ENCODE measurements at regions of chr14 and their contacts with region 1.

Region 1: GRCh38 chr14:67056684-67057083 is 132.6 kb upstream of the GARIN2 start:
- DNase-seq: no peak
- H3K4me3 ChIP-seq: no peak overlapping the region
- H3K27ac ChIP-seq: no peak overlapping the region
- H3K4me1 ChIP-seq: no peaks in the 10 kb centered on the region
- H3K27me3 ChIP-seq: no peaks in the 10 kb centered on the region
- CTCF ChIP-seq: no peak
- EP300 ChIP-seq: no peak
- POLR2A ChIP-seq: no peak

Region 2: DNA sequence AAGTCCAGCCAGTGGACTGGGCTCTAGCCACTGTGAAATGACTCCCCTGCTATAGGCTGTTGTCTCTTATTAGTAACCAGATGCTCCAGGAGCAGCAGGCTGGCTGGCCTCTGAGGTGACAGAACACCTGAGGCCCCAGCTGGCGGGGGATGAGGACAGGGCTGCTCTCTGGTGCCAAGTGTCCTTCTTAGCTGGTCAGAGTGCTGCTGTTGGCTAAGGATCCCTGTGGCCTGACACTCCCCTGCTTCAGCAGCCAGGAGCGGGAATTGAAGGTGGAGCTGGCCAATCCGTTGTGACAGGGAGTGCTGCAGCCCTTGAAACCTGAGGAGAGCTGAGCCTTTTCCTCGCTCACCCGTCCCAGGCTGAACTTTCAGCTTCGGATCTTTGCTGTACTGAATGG is 401.1 kb after region 1 on chr14:
- intact Hi-C with region 1: loop called in 1 of 4 experiments (anchors 10 kb)
- DNase-seq: no peak
- H3K4me3 ChIP-seq: no peak overlapping the region
- H3K27ac ChIP-seq: no peak overlapping the region
- H3K4me1 ChIP-seq: no peaks in the 10 kb centered on the region
- H3K27me3 ChIP-seq: no peaks in the 10 kb centered on the region
- CTCF ChIP-seq: no peak
- EP300 ChIP-seq: no peak
- POLR2A ChIP-seq: no peak